B cell (primary cell): ENCODE measurements at regions of chr2 and their contacts with region 1.

Region 1: DNA sequence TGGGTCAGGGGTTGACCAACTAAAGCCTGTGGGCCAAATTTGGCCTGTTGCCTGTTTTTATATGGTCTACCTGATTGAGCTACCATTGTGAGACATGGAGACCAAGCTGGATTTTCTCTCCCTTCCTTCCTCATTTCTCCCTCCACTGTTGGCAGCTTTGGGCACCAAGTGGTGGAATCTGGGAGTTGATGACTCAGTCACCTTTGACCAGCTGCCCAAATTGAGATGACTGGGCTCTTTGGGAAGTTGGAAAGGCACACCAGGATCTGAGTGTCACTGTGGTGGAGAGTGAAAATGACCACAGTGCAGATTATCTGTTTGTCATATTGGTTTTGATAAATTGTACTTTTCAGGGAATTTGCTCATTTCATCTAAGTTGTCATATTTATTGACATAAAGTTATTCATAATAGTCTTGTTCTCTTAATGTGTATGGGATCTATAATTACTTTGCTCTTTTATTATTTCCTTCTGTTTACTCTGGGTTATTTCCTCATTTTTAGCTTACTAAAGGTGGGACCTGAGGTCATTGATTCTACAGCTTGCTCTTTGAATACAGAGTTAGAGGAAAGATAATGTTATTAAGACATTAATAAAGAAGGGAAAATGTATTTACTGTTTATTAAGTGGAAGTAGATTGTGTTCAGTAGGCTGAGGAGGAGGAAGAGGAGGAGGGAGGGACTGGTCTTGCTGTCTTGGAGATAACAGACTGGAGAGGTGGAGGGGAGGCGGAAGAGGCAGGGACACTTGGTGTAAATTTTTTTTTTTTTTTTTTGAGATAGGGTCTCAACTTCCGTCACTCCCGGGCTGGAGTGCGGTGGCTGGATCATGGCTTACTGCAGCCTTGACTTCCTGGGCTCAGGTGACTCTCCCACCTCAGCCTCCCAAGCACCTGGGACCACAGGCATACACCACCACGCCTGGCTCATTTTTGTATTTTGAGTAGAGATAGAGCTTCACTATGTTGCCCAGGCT is 31.8 kb downstream of the AGFG1 start:
- DNase-seq: no peak
- ATAC-seq: no peak
- H3K4me3 ChIP-seq: no peak overlapping the region
- H3K4me3 Mint-ChIP-seq: peak overlapping the region; percentile 12
- H3K27ac ChIP-seq: peak overlapping the region in 1 of 2 donors; percentile 0
- H3K27ac Mint-ChIP-seq: no peak overlapping the region
- H3K4me1 ChIP-seq: peaks cover 40 to 51% of the 10 kb centered on the region in 2 donors
- H3K4me1 Mint-ChIP-seq: peaks cover 57% of the 10 kb centered on the region
- H3K27me3 ChIP-seq: no peaks in the 10 kb centered on the region
- H3K27me3 Mint-ChIP-seq: no peaks in the 10 kb centered on the region
- CTCF ChIP-seq: no peak

Region 2: DNA sequence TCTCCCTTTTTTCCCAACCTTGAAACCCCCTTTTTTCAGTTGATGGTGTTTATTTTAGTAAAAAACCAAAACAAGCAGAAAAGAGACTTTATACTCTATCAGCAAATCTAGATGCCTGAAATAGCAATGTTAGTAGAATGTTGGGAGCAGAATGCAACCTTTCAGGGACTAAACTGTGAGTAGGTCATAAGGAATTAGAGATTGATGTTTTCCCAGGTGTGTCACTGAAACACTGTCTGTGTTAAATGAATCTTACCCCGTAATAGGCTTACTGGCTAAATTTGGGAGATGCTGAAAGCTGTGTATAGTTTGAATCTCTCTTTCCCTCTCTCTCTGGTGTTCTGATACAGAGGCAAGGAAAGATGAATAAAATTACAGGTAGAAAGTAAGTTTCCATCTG is 12.0 kb after region 1 on chr2:
- CTCF ChIA-PET with region 1: no interaction called
- POLR2A ChIA-PET with region 1: no interaction called
- intact Hi-C with region 1: loop called (anchors 2 kb)
- DNase-seq: no peak
- ATAC-seq: no peak
- H3K4me3 ChIP-seq: no peak overlapping the region
- H3K4me3 Mint-ChIP-seq: no peak overlapping the region
- H3K27ac ChIP-seq: peak overlapping the region in 1 of 2 donors; percentile 7
- H3K27ac Mint-ChIP-seq: no peak overlapping the region
- H3K4me1 ChIP-seq: peaks cover 20 to 41% of the 10 kb centered on the region in 2 donors
- H3K4me1 Mint-ChIP-seq: peaks cover 81% of the 10 kb centered on the region
- H3K27me3 ChIP-seq: no peaks in the 10 kb centered on the region
- H3K27me3 Mint-ChIP-seq: no peaks in the 10 kb centered on the region
- CTCF ChIP-seq: no peak

Region 3: GRCh38 chr2:227545990-227546389 is 42.3 kb after region 1 on chr2:
- CTCF ChIA-PET with region 1: no interaction called
- POLR2A ChIA-PET with region 1: no interaction called
- intact Hi-C with region 1: loop called (anchors 5 kb)
- DNase-seq: peak; percentile 15
- ATAC-seq: no peak
- H3K4me3 ChIP-seq: no peak overlapping the region
- H3K4me3 Mint-ChIP-seq: no peak overlapping the region
- H3K27ac ChIP-seq: no peak overlapping the region
- H3K27ac Mint-ChIP-seq: no peak overlapping the region
- H3K4me1 ChIP-seq: no peaks in the 10 kb centered on the region
- H3K4me1 Mint-ChIP-seq: peaks cover 5% of the 10 kb centered on the region
- H3K27me3 ChIP-seq: no peaks in the 10 kb centered on the region
- H3K27me3 Mint-ChIP-seq: no peaks in the 10 kb centered on the region
- CTCF ChIP-seq: peak; percentile 38